Ascending aorta (tissue), 2 donors: ENCODE measurements at regions of chr3 and their contacts with region 1.

Region 1: DNA sequence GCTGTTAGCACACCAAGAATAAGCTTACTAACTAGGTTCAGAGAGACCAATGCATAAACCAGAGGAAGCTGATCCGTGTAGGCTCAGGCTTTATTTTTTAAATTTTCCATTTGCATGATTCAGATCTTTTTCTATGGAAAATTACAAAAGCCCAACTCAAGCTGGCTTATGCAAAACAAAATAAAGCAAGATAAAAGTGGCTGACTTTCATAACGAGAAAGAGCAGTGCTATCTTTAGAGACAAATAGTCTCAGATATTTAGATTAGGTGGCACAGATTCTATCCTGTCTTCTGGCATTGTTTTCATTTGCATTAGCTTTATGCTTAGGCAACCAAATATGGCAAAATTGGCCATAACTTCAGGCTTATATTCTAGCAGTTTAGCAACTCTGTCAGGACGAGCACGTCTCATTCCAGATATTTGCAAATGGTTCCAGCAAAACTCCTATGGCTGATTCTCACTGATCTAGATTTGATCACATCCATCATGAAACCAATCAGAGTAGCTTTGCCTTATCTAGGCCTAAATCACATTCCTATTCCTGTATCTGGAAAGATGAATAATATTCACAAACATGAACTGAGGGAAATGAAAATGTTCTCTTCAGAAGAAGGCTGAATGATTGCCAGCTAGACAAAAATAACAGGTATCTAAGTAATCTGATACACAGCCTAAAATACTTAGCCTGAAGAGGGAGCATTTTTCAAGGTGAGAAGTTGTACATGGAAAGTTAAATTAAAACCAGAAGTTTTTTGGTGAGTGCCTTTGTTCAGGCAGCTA is 216.4 kb upstream of the DPPA4 start:
- DNase-seq: no peak
- H3K4me3 ChIP-seq: no peak overlapping the region
- H3K27ac ChIP-seq: peak overlapping the region; percentile 67 to 77
- H3K4me1 ChIP-seq: peaks cover 0 to 10% of the 10 kb centered on the region in 2 donors
- H3K27me3 ChIP-seq: no peaks in the 10 kb centered on the region
- CTCF ChIP-seq: no peak

Region 2: GRCh38 chr3:108914774-108915641 is 638.8 kb before region 1 on chr3:
- intact Hi-C with region 1: no loop called
- DNase-seq: no peak
- H3K4me3 ChIP-seq: no peak overlapping the region
- H3K27ac ChIP-seq: no peak overlapping the region
- H3K4me1 ChIP-seq: no peaks in the 10 kb centered on the region
- H3K27me3 ChIP-seq: no peaks in the 10 kb centered on the region
- CTCF ChIP-seq: peak in 2 of 3 experiments; percentile 53 to 67

Region 3: DNA sequence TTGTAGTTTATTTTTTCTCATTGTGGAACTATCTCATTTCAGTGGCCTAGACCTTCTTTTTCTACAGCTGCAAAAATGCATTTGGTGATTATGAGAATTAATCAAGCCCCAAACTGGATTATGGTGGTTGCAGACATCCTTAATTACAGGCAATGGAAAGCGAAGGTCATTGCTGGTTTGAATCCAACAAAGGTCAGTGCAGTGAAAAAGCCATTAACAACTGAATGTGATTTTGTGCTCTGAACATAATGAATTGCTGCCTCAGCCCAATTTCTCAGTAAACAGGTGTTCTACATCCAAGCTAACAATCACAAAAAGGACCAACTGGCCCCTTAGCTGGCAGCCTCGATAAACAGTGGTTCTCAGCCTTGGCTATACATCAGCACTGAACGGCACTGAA is 43.7 kb after region 1 on chr3:
- intact Hi-C with region 1: no loop called
- DNase-seq: no peak
- H3K4me3 ChIP-seq: no peak overlapping the region
- H3K27ac ChIP-seq: no peak overlapping the region
- H3K4me1 ChIP-seq: no peaks in the 10 kb centered on the region
- H3K27me3 ChIP-seq: no peaks in the 10 kb centered on the region
- CTCF ChIP-seq: no peak

Region 4: GRCh38 chr3:109607897-109608296 is 54.1 kb after region 1 on chr3:
- intact Hi-C with region 1: no loop called
- DNase-seq: no peak
- H3K4me3 ChIP-seq: no peak overlapping the region
- H3K27ac ChIP-seq: no peak overlapping the region
- H3K4me1 ChIP-seq: no peaks in the 10 kb centered on the region
- H3K27me3 ChIP-seq: no peaks in the 10 kb centered on the region
- CTCF ChIP-seq: no peak

Region 5: GRCh38 chr3:109618766-109619378 is 65.1 kb after region 1 on chr3:
- intact Hi-C with region 1: no loop called
- DNase-seq: no peak
- H3K4me3 ChIP-seq: no peak overlapping the region
- H3K27ac ChIP-seq: no peak overlapping the region
- H3K4me1 ChIP-seq: no peaks in the 10 kb centered on the region
- H3K27me3 ChIP-seq: no peaks in the 10 kb centered on the region
- CTCF ChIP-seq: no peak

Region 6: DNA sequence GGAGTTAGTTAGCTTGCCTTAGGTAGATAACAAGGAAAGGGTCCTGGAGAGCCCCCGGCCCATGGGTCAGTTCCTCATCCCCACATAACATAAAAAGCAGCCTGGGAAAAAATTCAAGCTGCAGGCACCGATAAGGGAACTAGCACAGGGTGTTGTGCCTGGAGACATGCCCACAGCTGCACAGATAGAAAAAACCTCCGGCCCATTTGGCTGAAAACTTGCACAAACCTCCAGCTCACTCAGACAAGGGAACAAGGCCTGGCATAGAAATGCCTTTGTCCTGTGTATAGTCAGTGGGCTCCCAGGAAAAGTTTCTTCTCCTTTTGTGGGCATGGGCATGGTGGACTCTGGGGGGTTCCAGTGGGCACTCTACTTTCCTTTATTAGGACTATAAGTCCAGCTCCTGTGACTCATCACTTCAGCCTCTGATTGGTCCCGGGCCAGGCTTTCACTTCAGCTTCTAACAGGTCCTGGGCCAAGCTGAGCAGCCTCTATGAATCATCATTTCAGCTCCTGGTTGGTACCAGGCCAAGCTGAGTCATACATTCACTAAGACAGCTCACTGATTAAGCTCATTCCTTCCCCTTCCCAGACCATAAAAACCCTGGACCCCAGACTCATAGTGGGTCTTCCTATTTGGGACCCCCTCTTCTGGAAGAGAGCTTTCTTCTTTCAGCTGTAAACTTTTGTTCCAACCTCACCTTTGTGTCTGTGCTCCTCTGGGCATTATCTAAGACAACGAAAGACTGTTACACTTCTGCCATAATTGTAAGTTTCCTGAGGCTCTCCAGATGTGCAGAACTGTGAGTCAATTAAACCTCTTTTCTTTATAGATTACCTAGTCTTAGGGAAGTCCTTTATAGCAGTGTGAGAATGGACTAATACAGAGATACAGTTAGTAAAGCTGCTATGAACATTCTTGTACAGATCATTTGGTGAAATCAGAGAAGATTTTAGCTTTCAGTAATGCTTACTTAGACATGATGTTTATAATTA is 131.6 kb after region 1 on chr3:
- intact Hi-C with region 1: loop called (anchors 5 kb)
- DNase-seq: peak; percentile 91 to 98
- H3K4me3 ChIP-seq: peak overlapping the region in 1 of 2 donors; percentile 9
- H3K27ac ChIP-seq: peak overlapping the region; percentile 75 to 76
- H3K4me1 ChIP-seq: peaks cover 0 to 6% of the 10 kb centered on the region in 2 donors
- H3K27me3 ChIP-seq: no peaks in the 10 kb centered on the region
- CTCF ChIP-seq: no peak